ENCODE measurements at regions of chr13 and their contacts with region 1.

Region 1: GRCh38 chr13:64697226-64697625 is 2532.9 kb downstream of the PCDH9 start:
- DNase-seq: no peak
- H3K4me3 Mint-ChIP-seq: no peak overlapping the region
- H3K27ac Mint-ChIP-seq: no peak overlapping the region
- H3K4me1 Mint-ChIP-seq: no peaks in the 10 kb centered on the region
- H3K27me3 Mint-ChIP-seq: no peaks in the 10 kb centered on the region

Region 2: DNA sequence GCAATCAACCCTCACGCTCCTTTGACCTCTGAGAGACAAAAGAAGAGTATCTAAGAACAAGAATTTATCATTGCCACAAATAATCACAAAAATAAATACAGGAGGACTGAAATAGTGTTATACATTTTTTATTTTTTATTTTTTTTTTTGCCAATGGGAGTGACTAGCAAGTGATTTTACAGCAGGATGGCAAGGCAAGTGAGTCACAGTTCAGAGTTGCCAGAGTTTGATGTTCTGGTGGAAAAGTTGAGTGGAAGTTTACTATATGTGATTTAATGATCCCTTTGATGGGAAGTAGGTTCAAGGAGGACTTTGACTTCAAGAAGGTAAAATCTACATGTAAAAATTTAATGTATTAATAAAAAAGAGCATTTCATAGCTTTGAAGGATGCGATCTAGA is 158.5 kb before region 1 on chr13:
- intact Hi-C with region 1: no loop called
- DNase-seq: no peak
- H3K4me3 Mint-ChIP-seq: no peak overlapping the region
- H3K27ac Mint-ChIP-seq: no peak overlapping the region
- H3K4me1 Mint-ChIP-seq: no peaks in the 10 kb centered on the region
- H3K27me3 Mint-ChIP-seq: no peaks in the 10 kb centered on the region

Region 3: GRCh38 chr13:64684685-64685431 is 12.4 kb before region 1 on chr13:
- intact Hi-C with region 1: loop called (anchors 1 kb)
- DNase-seq: no peak
- H3K4me3 Mint-ChIP-seq: no peak overlapping the region
- H3K27ac Mint-ChIP-seq: no peak overlapping the region
- H3K4me1 Mint-ChIP-seq: no peaks in the 10 kb centered on the region
- H3K27me3 Mint-ChIP-seq: no peaks in the 10 kb centered on the region

Region 4: GRCh38 chr13:64723724-64724123 is 26.5 kb after region 1 on chr13:
- intact Hi-C with region 1: no loop called
- DNase-seq: no peak
- H3K4me3 Mint-ChIP-seq: no peak overlapping the region
- H3K27ac Mint-ChIP-seq: no peak overlapping the region
- H3K4me1 Mint-ChIP-seq: no peaks in the 10 kb centered on the region
- H3K27me3 Mint-ChIP-seq: no peaks in the 10 kb centered on the region

Region 5: GRCh38 chr13:65613004-65613403 is 915.8 kb after region 1 on chr13:
- intact Hi-C with region 1: no loop called
- DNase-seq: no peak
- H3K4me3 Mint-ChIP-seq: no peak overlapping the region
- H3K27ac Mint-ChIP-seq: no peak overlapping the region
- H3K4me1 Mint-ChIP-seq: no peaks in the 10 kb centered on the region
- H3K27me3 Mint-ChIP-seq: no peaks in the 10 kb centered on the region

Measured in activated T-helper 1 cell treated with anti-CD3 and anti-CD28 coated beads, Interleukin-12 subunit alpha, Interleukin-12 subunit beta, Interleukin-2, Interleukin-4 antibody, amounts not matched to agents 30 ng/mL and 10 ng/mL and 1 ng/mL, durations not matched to agents 14 hours and 24 hours and 36 hours (primary cell).